ENCODE measurements at regions of chr16 and their contacts with region 1.

Region 1: GRCh38 chr16:35559911-35560636 is 2100.7 kb downstream of the TP53TG3F start:
- DNase-seq: no peak
- H3K4me3 ChIP-seq: no peak overlapping the region
- H3K27ac ChIP-seq: no peak overlapping the region
- H3K4me1 ChIP-seq: no peaks in the 10 kb centered on the region
- H3K27me3 ChIP-seq: no peaks in the 10 kb centered on the region
- CTCF ChIP-seq: no peak
- POLR2A ChIP-seq: no peak

Region 2: GRCh38 chr16:35881654-35882053 is 321.6 kb after region 1 on chr16:
- intact Hi-C with region 1: loop called in 1 of 2 experiments (anchors 5 kb)
- DNase-seq: no peak
- H3K4me3 ChIP-seq: no peak overlapping the region
- H3K27ac ChIP-seq: no peak overlapping the region
- H3K4me1 ChIP-seq: no peaks in the 10 kb centered on the region
- H3K27me3 ChIP-seq: no peaks in the 10 kb centered on the region
- CTCF ChIP-seq: no peak
- POLR2A ChIP-seq: no peak

Measured in adrenal gland (tissue), 19 donors.